Activated CD4-positive, alpha-beta memory T cell treated with anti-CD3 and anti-CD28 coated beads for 36 hours (primary cell): ENCODE measurements at regions of chr5 and their contacts with region 1.

Region 1: GRCh38 chr5:1792842-1793266 is 6.8 kb downstream of the MRPL36 start:
- DNase-seq: peak; percentile 92
- H3K4me3 Mint-ChIP-seq: peak overlapping the region; percentile 83
- H3K27ac Mint-ChIP-seq: peak overlapping the region; percentile 99
- H3K4me1 Mint-ChIP-seq: peaks cover 77% of the 10 kb centered on the region
- H3K27me3 Mint-ChIP-seq: peaks cover 2% of the 10 kb centered on the region

Region 2: GRCh38 chr5:270340-270739 is 1522.5 kb before region 1 on chr5:
- CTCF ChIA-PET with region 1: no interaction called
- POLR2A ChIA-PET with region 1: no interaction called
- intact Hi-C with region 1: loop called (anchors 5 kb)
- DNase-seq: no peak
- H3K4me3 Mint-ChIP-seq: peak overlapping the region; percentile 85
- H3K27ac Mint-ChIP-seq: peak overlapping the region; percentile 42
- H3K4me1 Mint-ChIP-seq: peaks cover 44% of the 10 kb centered on the region
- H3K27me3 Mint-ChIP-seq: no peaks in the 10 kb centered on the region

Region 3: GRCh38 chr5:1315709-1316587 is 476.9 kb before region 1 on chr5:
- CTCF ChIA-PET with region 1: no interaction called
- POLR2A ChIA-PET with region 1: no interaction called
- intact Hi-C with region 1: loop called (anchors 5 kb)
- DNase-seq: peak; percentile 70
- H3K4me3 Mint-ChIP-seq: peak overlapping the region; percentile 53
- H3K27ac Mint-ChIP-seq: peak overlapping the region; percentile 89
- H3K4me1 Mint-ChIP-seq: peaks cover 57% of the 10 kb centered on the region
- H3K27me3 Mint-ChIP-seq: no peaks in the 10 kb centered on the region

Region 4: DNA sequence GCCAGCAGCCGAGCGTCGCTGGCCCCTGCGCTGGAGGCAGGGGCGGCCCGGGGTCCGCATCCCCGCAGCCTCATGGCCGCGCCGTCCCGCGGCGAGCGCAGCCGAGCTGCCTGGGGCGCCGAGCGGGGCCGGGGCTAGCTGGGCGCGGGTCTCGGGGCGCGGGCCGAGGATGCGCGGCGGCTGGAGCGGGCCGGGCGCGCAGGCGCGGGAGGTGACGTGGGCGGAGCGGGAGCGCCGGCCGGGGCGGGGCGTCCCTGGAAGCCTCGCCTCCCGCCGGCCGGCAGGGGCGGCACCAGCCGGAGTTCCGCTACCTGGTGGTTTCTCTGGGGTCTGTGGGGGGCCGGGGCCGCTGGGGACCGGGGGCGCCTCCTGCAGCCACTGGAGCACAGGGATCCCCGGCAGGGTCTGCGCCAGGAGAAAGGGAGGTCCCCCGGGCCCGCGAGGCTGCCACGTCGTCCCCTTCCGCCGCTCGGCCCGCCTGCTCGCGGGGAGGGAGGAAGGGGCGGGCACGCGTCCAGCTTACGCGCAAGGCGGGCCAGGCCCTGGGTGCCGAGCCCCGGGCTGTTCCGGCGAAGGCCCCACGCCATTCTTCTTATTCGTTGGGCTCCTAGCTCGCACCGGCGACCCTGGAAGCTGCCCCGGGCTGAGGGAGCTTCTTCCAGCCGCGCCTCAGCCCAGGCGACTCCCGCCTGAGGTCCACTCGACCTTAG is 268.9 kb before region 1 on chr5 and contains the start of gene LPCAT1:
- CTCF ChIA-PET with region 1: no interaction called
- POLR2A ChIA-PET with region 1: no interaction called
- intact Hi-C with region 1: loop called (anchors 5 kb)
- DNase-seq: peak; percentile 81
- H3K4me3 Mint-ChIP-seq: peak within 1 kb of the TSS; percentile 86
- H3K27ac Mint-ChIP-seq: peak within 1 kb of the TSS; percentile 66
- H3K4me1 Mint-ChIP-seq: peaks cover 33% of the 10 kb centered on the region
- H3K27me3 Mint-ChIP-seq: no peaks in the 10 kb centered on the region
- total RNA-seq, gene LPCAT1: 48.4 to 51.4 TPM